HCT116 (cell line): ENCODE measurements at regions of chrX and their contacts with region 1.

Region 1: GRCh38 chrX:20530406-20530921 is 263.8 kb upstream of the RPS6KA3 start:
- DNase-seq: peak; percentile 29
- ATAC-seq: peak; percentile 70
- H3K4me3 ChIP-seq: no peak overlapping the region
- H3K27ac ChIP-seq: no peak overlapping the region
- H3K4me1 ChIP-seq: no peaks in the 10 kb centered on the region; a peak in 1 of 4 replicates
- H3K27me3 ChIP-seq: no peaks in the 10 kb centered on the region
- CTCF ChIP-seq: peak; percentile 39 to 67 (median 51); a peak in 5 of 6 replicates
- POLR2A ChIP-seq: no peak
- RAD21 ChIP-seq: peak; percentile 72

Region 2: GRCh38 chrX:20252381-20253231 is 277.9 kb before region 1 on chrX:
- CTCF ChIA-PET with region 1: interaction called, 3 read pairs
- POLR2A ChIA-PET with region 1: no interaction called
- RAD21 ChIA-PET with region 1: no interaction called
- intact Hi-C with region 1: loop called (anchors 10 kb)
- DNase-seq: peak; percentile 26
- ATAC-seq: peak; percentile 75
- H3K4me3 ChIP-seq: no peak overlapping the region
- H3K27ac ChIP-seq: no peak overlapping the region
- H3K4me1 ChIP-seq: peaks cover 0 to 7% of the 10 kb centered on the region in 2 experiments; a peak in 1 of 4 replicates
- H3K27me3 ChIP-seq: no peaks in the 10 kb centered on the region
- CTCF ChIP-seq: peak; percentile 27 to 68 (median 57); a peak in 5 of 6 replicates
- POLR2A ChIP-seq: no peak
- RAD21 ChIP-seq: peak; percentile 58

Region 3: DNA sequence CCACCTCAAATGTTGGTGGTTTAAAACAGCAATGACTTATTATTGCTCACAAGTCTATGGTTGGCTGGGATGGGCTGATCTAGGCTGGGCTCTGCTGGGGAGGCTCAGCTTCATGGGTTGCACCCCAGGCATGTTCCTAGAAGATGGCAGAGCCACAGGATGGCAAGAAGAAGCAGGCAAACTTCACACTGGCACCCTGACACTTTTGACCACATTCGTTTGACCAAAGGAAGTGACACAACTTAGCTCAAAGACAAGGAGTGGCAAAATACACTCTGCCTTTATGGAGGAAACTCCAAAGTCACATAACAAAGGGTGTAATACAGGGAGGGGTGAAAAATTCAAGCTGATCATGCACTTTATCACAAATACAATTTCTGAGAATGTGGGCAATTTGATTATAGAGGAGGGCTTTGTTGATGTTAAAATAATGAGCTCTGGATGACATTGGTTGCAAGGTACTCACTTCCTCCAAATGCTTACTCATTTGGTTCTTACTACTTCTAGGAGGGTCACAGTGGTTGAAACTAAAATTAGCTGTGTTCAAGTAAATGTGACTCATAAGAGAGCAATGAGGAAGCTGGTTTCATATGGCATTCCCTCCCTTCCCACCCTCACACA is 14.5 kb before region 1 on chrX:
- CTCF ChIA-PET with region 1: interaction called, 13 read pairs
- POLR2A ChIA-PET with region 1: interaction called, 3 read pairs
- RAD21 ChIA-PET with region 1: no interaction called
- intact Hi-C with region 1: no loop called
- DNase-seq: peak; percentile 73
- ATAC-seq: peak; percentile 81
- H3K4me3 ChIP-seq: peak overlapping the region in 1 of 2 experiments; percentile 11; a peak in 1 of 4 replicates
- H3K27ac ChIP-seq: peak overlapping the region; percentile 81
- H3K4me1 ChIP-seq: peaks cover 26 to 61% of the 10 kb centered on the region in 2 experiments
- H3K27me3 ChIP-seq: no peaks in the 10 kb centered on the region
- CTCF ChIP-seq: no peak
- POLR2A ChIP-seq: no peak
- RAD21 ChIP-seq: peak; percentile 14; the same call in 1 of the 2 replicates

Region 4: DNA sequence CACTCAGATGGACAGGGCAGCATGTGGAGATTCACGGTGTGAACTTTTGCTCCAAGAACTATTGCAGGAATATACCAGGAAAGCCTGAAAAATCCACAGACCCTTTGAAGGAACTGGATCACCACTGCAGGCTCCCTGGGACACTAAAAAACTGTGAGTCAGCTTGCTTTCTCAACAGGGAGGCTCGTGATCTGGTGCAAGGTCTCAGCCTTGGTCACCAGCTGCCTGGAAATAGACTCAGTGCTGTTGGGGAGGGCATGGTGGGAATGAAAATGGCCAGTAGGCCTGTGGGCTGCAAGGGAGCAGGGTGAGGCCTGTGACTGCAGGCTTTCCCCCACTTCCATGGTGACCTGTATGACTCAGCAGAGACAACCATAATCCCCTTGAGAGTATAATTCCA is 162.6 kb after region 1 on chrX:
- CTCF ChIA-PET with region 1: no interaction called
- POLR2A ChIA-PET with region 1: no interaction called
- RAD21 ChIA-PET with region 1: no interaction called
- intact Hi-C with region 1: no loop called
- DNase-seq: no peak
- ATAC-seq: no peak
- H3K4me3 ChIP-seq: no peak overlapping the region
- H3K27ac ChIP-seq: no peak overlapping the region
- H3K4me1 ChIP-seq: no peaks in the 10 kb centered on the region
- H3K27me3 ChIP-seq: no peaks in the 10 kb centered on the region
- CTCF ChIP-seq: no peak
- POLR2A ChIP-seq: no peak
- RAD21 ChIP-seq: no peak

Region 5: DNA sequence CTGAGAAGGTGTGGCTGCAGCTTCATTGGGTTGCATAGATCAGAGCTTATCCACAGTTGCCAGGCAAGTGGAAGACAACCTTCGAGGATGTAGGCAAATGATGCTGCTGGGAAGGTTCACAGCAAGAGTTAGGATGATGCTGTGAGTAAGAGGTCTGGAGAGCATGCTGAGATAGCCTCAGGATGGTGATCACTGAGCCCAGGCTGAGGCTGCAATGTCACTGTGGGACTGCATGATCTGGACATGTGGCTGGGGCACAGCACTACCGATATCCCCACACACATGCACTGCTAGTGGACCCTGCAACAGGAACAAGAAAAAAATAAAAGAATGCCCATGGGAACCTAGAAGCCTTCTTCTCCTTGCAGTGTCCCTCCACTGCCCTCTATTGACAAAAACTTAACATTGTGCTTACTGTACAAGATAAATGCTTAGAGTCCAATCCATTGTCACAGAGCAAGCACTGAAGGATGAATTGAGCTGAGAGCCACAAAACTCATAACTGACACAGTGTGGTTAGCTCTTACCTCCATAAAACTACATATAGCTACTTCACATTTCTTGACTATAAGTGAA is 949.3 kb after region 1 on chrX:
- CTCF ChIA-PET with region 1: interaction called, 15 read pairs
- POLR2A ChIA-PET with region 1: no interaction called
- RAD21 ChIA-PET with region 1: interaction called in 1 of 2 experiments, 3 read pairs
- intact Hi-C with region 1: loop called (anchors 1 kb)
- DNase-seq: no peak
- ATAC-seq: peak; percentile 81
- H3K4me3 ChIP-seq: no peak overlapping the region
- H3K27ac ChIP-seq: no peak overlapping the region
- H3K4me1 ChIP-seq: no peaks in the 10 kb centered on the region
- H3K27me3 ChIP-seq: no peaks in the 10 kb centered on the region
- CTCF ChIP-seq: peak in 2 of 3 experiments; percentile 40 to 58; a peak in 4 of 6 replicates
- POLR2A ChIP-seq: no peak
- RAD21 ChIP-seq: peak; percentile 58

Region 6: GRCh38 chrX:21725496-21725895 is 1195.0 kb after region 1 on chrX:
- CTCF ChIA-PET with region 1: interaction called, 32 read pairs
- POLR2A ChIA-PET with region 1: no interaction called
- RAD21 ChIA-PET with region 1: no interaction called
- intact Hi-C with region 1: loop called (anchors 1 kb)
- DNase-seq: peak; percentile 6
- ATAC-seq: no peak
- H3K4me3 ChIP-seq: no peak overlapping the region
- H3K27ac ChIP-seq: no peak overlapping the region
- H3K4me1 ChIP-seq: no peaks in the 10 kb centered on the region
- H3K27me3 ChIP-seq: peaks cover 8% of the 10 kb centered on the region; the same call in 1 of the 2 replicates
- CTCF ChIP-seq: peak; percentile 11 to 49 (median 38); a peak in 3 of 6 replicates
- POLR2A ChIP-seq: no peak
- RAD21 ChIP-seq: peak; percentile 63

Region 7: DNA sequence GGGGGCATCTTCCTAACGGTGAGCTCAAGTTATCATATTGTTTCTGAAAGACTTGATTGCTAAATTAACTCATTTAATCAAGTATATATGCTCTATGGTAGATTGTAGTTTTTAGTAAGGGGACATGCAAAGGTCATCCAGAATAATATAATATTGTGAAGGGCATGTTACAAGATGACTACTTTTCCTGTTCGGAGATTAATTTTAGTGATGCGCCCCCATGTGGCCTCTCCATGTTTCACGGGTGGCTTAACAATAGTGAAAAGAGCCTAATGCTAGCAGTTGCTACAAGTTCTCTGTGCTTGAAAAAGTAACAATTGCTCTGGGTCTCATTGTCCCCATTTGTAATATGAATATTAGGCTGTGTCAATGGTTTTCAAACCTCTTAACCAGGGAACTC is 1215.3 kb after region 1 on chrX:
- CTCF ChIA-PET with region 1: interaction called, 4 read pairs
- POLR2A ChIA-PET with region 1: no interaction called
- RAD21 ChIA-PET with region 1: no interaction called
- intact Hi-C with region 1: loop called (anchors 5 kb)
- DNase-seq: no peak
- ATAC-seq: peak; percentile 79
- H3K4me3 ChIP-seq: no peak overlapping the region
- H3K27ac ChIP-seq: no peak overlapping the region
- H3K4me1 ChIP-seq: no peaks in the 10 kb centered on the region
- H3K27me3 ChIP-seq: no peaks in the 10 kb centered on the region
- CTCF ChIP-seq: peak; percentile 22 to 64 (median 54); a peak in 5 of 6 replicates
- POLR2A ChIP-seq: no peak
- RAD21 ChIP-seq: peak; percentile 46

Region 8: DNA sequence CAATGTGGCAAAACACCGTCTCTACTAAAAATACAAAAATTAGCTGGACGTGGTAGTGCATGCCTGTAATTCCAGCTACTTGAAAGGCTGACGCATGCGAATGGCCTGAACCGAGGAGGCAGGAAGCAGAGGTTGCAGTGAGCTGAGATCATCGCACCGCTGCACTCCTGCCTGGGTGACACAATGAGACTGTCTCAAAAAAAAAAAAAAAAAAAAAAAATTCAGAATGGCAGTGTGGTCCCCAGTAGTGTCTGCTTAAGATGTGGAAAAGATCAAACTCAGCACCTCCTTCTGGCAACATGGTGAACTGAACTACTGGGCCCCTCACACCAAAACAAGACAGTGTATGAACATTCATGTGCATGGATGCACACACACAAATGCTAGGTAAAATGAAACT is 1442.3 kb after region 1 on chrX:
- CTCF ChIA-PET with region 1: no interaction called
- POLR2A ChIA-PET with region 1: no interaction called
- RAD21 ChIA-PET with region 1: no interaction called
- intact Hi-C with region 1: loop called (anchors 10 kb)
- DNase-seq: no peak
- ATAC-seq: peak; percentile 53
- H3K4me3 ChIP-seq: no peak overlapping the region
- H3K27ac ChIP-seq: no peak overlapping the region
- H3K4me1 ChIP-seq: no peaks in the 10 kb centered on the region
- H3K27me3 ChIP-seq: no peaks in the 10 kb centered on the region
- CTCF ChIP-seq: 0 out of 6 replicates have a peak, but pooled peaks of 1 of the 3 experiments have one; percentile 14
- POLR2A ChIP-seq: no peak
- RAD21 ChIP-seq: no peak